CD8-positive, alpha-beta T cell (primary cell): ENCODE measurements at regions of chr5 and their contacts with region 1.

Region 1: DNA sequence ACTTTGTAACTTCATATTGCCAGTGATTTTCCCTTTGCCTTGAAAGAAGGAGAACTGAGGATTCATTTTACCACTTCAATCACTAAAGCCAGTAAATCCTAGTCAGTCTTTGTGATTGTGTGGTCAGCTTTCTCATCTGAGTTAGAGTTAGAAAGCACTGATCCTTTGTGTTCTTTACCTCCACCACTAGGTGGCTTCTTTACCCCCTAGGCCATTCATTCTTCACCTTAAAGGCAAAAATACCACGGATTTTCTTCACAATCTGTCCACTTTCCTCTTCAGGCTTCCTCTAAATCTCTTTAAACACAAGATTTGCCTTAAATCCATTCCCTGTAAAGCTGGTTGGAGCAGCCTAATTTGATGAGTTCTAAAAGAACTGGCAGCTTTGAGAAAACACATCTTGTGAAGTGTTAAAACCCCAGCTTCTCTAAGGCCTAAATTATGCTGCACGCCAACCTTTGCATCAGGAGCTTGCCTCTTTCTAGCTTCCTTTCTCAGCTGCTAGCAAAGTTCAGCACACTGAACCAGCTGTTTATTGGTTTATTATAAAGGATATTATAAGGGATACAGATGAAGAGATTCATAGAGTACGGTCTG is 20.4 kb downstream of the BDP1 start:
- DNase-seq: peak in 2 of 9 experiments; percentile 18 to 36
- ATAC-seq: peak; percentile 44
- H3K4me3 ChIP-seq: no peak overlapping the region
- H3K4me3 Mint-ChIP-seq: no peak overlapping the region
- H3K27ac ChIP-seq: no peak overlapping the region
- H3K27ac Mint-ChIP-seq: no peak overlapping the region
- H3K4me1 ChIP-seq: no peaks in the 10 kb centered on the region
- H3K4me1 Mint-ChIP-seq: peaks cover 2% of the 10 kb centered on the region
- H3K27me3 ChIP-seq: no peaks in the 10 kb centered on the region
- H3K27me3 Mint-ChIP-seq: no peaks in the 10 kb centered on the region
- CTCF ChIP-seq: peak; percentile 51

Region 2: DNA sequence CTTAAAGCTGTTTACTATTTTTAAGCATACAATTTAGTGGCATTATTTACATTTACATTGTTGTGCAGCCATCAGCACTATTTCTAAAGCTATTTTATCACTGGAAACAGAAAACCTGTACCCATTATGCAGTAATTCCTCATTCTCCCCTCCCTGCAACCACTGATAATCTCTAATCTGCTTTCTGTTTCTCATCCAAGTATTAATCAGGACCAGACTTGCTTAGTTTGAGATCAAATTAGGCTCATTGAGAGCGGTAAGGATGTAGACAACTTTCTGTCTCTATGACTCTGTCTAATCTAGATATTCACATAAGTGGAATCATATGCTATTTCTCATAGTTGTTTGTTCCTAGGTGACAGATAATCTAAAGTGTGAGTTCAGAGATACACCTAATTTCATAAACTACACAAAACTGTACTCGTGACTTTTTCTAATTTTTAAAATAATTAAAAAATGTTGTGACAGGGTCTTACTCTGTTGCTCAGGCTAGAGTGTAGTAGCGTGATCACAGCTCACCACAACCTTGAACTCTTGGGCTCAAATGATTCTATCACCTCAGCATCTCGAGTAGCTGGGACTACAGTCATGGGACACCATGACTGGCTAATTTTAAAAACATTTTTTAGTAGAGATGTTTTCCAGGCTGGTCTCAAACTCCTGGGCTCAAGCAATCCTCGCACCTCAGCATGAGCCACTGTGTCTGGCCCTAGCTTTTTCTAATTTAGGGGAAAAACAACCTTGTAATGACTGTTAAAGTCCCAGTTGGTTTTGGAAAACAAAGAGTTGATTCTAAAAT is 17.1 kb after region 1 on chr5:
- CTCF ChIA-PET with region 1: interaction called, 11 read pairs
- POLR2A ChIA-PET with region 1: no interaction called
- intact Hi-C with region 1: no loop called
- DNase-seq: no peak
- ATAC-seq: no peak
- H3K4me3 ChIP-seq: no peak overlapping the region
- H3K4me3 Mint-ChIP-seq: no peak overlapping the region
- H3K27ac ChIP-seq: no peak overlapping the region
- H3K27ac Mint-ChIP-seq: no peak overlapping the region
- H3K4me1 ChIP-seq: no peaks in the 10 kb centered on the region
- H3K4me1 Mint-ChIP-seq: peaks cover 2% of the 10 kb centered on the region
- H3K27me3 ChIP-seq: no peaks in the 10 kb centered on the region
- H3K27me3 Mint-ChIP-seq: no peaks in the 10 kb centered on the region
- CTCF ChIP-seq: no peak

Region 3: GRCh38 chr5:71508751-71509150 is 32.9 kb after region 1 on chr5:
- CTCF ChIA-PET with region 1: no interaction called
- POLR2A ChIA-PET with region 1: no interaction called
- intact Hi-C with region 1: loop called in 1 of 2 experiments (anchors 5 kb)
- DNase-seq: no peak
- ATAC-seq: no peak
- H3K4me3 ChIP-seq: no peak overlapping the region
- H3K4me3 Mint-ChIP-seq: no peak overlapping the region
- H3K27ac ChIP-seq: no peak overlapping the region
- H3K27ac Mint-ChIP-seq: no peak overlapping the region
- H3K4me1 ChIP-seq: no peaks in the 10 kb centered on the region
- H3K4me1 Mint-ChIP-seq: peaks cover 9% of the 10 kb centered on the region
- H3K27me3 ChIP-seq: no peaks in the 10 kb centered on the region
- H3K27me3 Mint-ChIP-seq: no peaks in the 10 kb centered on the region
- CTCF ChIP-seq: no peak

Region 4: GRCh38 chr5:71751422-71751821 is 275.5 kb after region 1 on chr5:
- CTCF ChIA-PET with region 1: interaction called, 3 read pairs
- POLR2A ChIA-PET with region 1: no interaction called
- intact Hi-C with region 1: loop called in 1 of 2 experiments (anchors 5 kb)
- DNase-seq: no peak
- ATAC-seq: no peak
- H3K4me3 ChIP-seq: no peak overlapping the region
- H3K4me3 Mint-ChIP-seq: no peak overlapping the region
- H3K27ac ChIP-seq: no peak overlapping the region
- H3K27ac Mint-ChIP-seq: no peak overlapping the region
- H3K4me1 ChIP-seq: no peaks in the 10 kb centered on the region
- H3K4me1 Mint-ChIP-seq: no peaks in the 10 kb centered on the region
- H3K27me3 ChIP-seq: no peaks in the 10 kb centered on the region
- H3K27me3 Mint-ChIP-seq: no peaks in the 10 kb centered on the region
- CTCF ChIP-seq: no peak